Right ventricle myocardium inferior (tissue), 1 donor: ENCODE measurements at regions of chrX and their contacts with region 1.

Region 1: DNA sequence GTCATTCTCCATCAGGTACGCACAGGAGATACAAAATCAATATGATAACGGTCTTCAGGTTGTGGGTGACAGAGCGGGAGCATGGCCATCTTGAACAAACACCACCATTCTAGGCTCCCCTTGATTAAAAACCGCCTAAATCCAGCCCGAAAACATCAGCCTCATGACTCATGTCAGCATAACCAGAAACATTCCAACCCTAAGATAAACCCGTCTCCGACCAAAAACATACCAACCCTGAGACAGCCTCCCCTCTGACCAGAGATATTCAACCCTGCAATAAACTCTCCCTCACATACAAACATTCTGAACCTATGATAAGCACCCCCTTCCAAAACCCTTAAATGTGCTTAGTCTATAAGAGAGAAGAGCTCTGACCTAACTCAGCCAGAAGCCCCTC is 157.9 kb downstream of the DHRSX start:
- DNase-seq: no peak
- ATAC-seq: no peak

Region 2: GRCh38 chrX:2325076-2325784 is 17.6 kb before region 1 on chrX:
- intact Hi-C with region 1: loop called (anchors 2 kb)
- DNase-seq: peak; percentile 65
- ATAC-seq: no peak

Region 3: DNA sequence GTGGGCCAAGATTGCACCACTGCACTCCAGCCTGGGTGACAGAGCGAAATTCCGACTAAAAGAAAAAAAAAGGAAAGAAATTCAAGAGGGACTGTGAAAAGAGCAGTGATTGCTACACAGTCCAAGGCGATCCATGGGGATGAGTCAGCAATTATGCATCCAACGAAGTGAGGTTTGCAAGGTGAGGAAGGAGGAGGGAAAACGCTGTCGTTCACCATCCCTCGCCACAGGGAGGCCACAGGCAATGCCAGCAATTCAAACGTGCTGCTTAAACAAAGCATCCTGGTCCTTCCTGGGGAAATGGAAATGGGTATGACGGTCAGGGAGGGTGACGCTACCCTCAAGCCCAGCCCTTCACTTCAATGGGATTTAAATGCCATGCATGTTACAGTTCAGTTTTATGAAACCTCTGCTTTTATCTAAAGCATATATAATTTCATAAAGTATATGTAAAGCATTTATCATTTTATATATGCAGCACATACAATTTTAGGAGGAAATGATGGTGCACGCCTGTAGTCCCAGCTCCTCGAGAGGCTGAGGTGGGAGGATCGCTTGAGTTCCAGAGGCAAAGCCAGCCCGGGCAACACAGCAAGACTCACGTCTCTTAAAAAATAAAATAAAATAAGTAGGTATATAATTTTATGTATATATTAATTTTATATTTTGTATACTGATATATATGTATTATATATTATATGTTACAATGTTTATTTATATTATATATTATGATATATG is 49.2 kb after region 1 on chrX:
- intact Hi-C with region 1: no loop called
- DNase-seq: no peak
- ATAC-seq: no peak

Region 4: GRCh38 chrX:2498781-2499302 is 156.0 kb after region 1 on chrX:
- intact Hi-C with region 1: loop called (anchors 5 kb)
- DNase-seq: no peak
- ATAC-seq: peak; percentile 66

Region 5: DNA sequence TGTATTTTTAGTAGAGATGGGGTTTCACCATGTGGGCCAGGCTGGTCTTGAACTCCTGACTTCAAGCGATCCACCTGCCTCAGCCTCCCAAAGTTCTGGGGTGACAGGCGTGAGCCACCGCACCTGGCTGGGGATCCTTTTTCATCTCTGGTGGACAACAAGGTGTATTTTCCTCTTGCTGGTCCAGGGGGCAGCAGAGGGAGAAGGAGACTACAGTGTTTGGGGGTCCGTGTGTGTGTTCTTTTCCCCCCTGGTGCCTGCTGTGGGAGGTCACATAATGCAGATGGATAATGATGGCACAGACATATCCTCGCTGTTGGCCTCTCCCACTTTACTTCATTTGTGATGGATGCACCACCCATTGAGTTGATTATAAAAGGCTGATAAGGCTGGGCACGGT is 309.2 kb after region 1 on chrX:
- intact Hi-C with region 1: no loop called
- DNase-seq: no peak
- ATAC-seq: no peak